T-cell (primary cell): ENCODE measurements at regions of chr14 and their contacts with region 1.

Region 1: DNA sequence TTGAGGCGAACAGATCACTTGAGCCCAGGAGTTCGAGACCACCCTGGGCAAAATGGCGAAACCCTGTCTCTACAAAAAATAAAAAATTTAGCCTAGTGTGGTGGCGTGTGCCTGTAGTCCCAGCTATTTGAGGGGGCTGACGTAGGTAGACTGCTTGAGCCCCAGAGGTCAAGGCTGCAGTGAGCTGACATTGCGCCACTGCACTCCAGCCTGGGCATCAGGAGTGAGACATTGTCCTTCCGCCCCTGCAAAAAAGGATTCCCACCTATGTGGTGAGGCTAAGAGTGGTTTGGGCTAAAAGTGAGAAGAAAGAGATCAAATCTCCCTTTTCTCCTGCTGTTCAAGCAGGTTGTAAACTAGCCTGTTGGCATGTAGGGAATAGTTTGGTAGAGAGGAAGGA is 5.0 kb upstream of the KTN1 start:
- DNase-seq: no peak
- ATAC-seq: no peak
- H3K4me3 ChIP-seq: no peak overlapping the region
- H3K4me3 Mint-ChIP-seq: no peak overlapping the region
- H3K27ac ChIP-seq: no peak overlapping the region
- H3K27ac Mint-ChIP-seq: no peak overlapping the region
- H3K4me1 ChIP-seq: peaks cover 0 to 10% of the 10 kb centered on the region in 2 experiments
- H3K4me1 Mint-ChIP-seq: peaks cover 14 to 20% (median 19%) of the 10 kb centered on the region in 3 donors
- H3K27me3 ChIP-seq: no peaks in the 10 kb centered on the region
- H3K27me3 Mint-ChIP-seq: peaks cover 0 to 2% of the 10 kb centered on the region in 2 donors

Region 2: DNA sequence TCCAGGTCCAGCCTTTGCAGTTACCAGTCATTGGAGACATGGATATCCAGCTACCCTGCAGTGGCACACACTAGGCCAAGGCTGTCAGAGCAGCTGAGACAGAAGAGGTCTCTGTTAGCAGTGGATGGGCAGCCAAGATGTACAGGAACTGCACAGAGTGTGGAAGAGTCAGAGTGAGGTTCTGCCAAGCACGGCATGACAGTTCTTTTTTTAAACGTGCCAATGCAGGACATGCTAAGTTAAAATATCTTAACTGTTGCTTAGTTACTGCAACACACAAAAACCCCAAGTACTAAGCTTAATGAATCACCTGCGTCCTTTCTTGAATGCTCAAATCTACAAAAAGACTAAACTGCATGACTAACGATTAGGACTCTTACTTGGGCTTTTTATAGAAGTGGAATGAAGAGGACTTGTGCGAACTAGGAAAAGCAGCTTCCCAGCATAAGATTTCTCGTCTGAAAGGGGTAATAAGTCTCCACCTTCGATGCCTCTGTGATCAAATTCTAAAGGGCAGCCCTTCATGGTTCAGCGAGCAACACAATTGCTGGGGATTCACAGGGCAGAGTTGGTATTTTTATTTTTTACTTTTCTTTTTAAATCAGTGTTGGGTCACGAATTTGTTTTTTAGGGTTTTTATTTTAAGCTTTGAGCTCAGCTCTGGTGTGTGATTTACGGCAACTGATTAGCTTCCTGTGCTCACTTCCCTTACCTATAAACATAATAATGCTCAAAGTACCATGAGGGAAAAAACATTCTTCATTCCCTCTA is 502.9 kb before region 1 on chr14:
- CTCF ChIA-PET with region 1: no interaction called
- POLR2A ChIA-PET with region 1: interaction called in 1 of 2 experiments, 10 read pairs
- DNase-seq: peak in 4 of 35 experiments; percentile 9 to 54 (median 12)
- ATAC-seq: peak; percentile 56 to 74 (median 68)
- H3K4me3 ChIP-seq: no peak overlapping the region
- H3K4me3 Mint-ChIP-seq: peak overlapping the region; percentile 53 to 63 (median 59)
- H3K27ac ChIP-seq: peak overlapping the region; percentile 64
- H3K27ac Mint-ChIP-seq: peak overlapping the region; percentile 89 to 93
- H3K4me1 ChIP-seq: peaks cover 6 to 15% of the 10 kb centered on the region in 2 experiments
- H3K4me1 Mint-ChIP-seq: peaks cover 42 to 43% (median 43%) of the 10 kb centered on the region in 3 donors
- H3K27me3 ChIP-seq: no peaks in the 10 kb centered on the region
- H3K27me3 Mint-ChIP-seq: no peaks in the 10 kb centered on the region